Activated CD8-positive, alpha-beta T cell treated with anti-CD3 and anti-CD28 coated beads, Interleukin-2, amount 10 ng/mL, durations not matched to agents 7 days and 5 days (primary cell): ENCODE measurements at regions of chr16 and their contacts with region 1.

Region 1: GRCh38 chr16:69726296-69727060 is at the start of gene NQO1:
- DNase-seq: peak; percentile 95
- ATAC-seq: peak; percentile 99
- H3K4me3 Mint-ChIP-seq: peak within 1 kb of the TSS; percentile 84
- H3K27ac Mint-ChIP-seq: peak within 1 kb of the TSS; percentile 94
- H3K4me1 Mint-ChIP-seq: peaks cover 51% of the 10 kb centered on the region
- H3K27me3 Mint-ChIP-seq: no peaks in the 10 kb centered on the region
- total RNA-seq, gene NQO1: 18.3 to 20.1 TPM

Region 2: GRCh38 chr16:69709456-69710084 is 16.9 kb before region 1 on chr16:
- CTCF ChIA-PET with region 1: interaction called, 12 read pairs
- POLR2A ChIA-PET with region 1: interaction called, 3 read pairs
- DNase-seq: no peak
- ATAC-seq: peak; percentile 58
- H3K4me3 Mint-ChIP-seq: no peak overlapping the region
- H3K27ac Mint-ChIP-seq: no peak overlapping the region
- H3K4me1 Mint-ChIP-seq: no peaks in the 10 kb centered on the region
- H3K27me3 Mint-ChIP-seq: no peaks in the 10 kb centered on the region

Region 3: GRCh38 chr16:69741919-69742904 is 15.7 kb after region 1 on chr16:
- CTCF ChIA-PET with region 1: no interaction called
- POLR2A ChIA-PET with region 1: no interaction called
- DNase-seq: no peak
- ATAC-seq: no peak
- H3K4me3 Mint-ChIP-seq: no peak overlapping the region
- H3K27ac Mint-ChIP-seq: no peak overlapping the region
- H3K4me1 Mint-ChIP-seq: peaks cover under 1% of the 10 kb centered on the region
- H3K27me3 Mint-ChIP-seq: no peaks in the 10 kb centered on the region

Region 4: GRCh38 chr16:69761983-69762813 is 35.7 kb after region 1 on chr16 and contains the start of gene WWP2:
- CTCF ChIA-PET with region 1: interaction called, 5 read pairs
- POLR2A ChIA-PET with region 1: interaction called, 16 read pairs
- DNase-seq: peak; percentile 82
- ATAC-seq: peak; percentile 87
- H3K4me3 Mint-ChIP-seq: peak within 1 kb of the TSS; percentile 89
- H3K27ac Mint-ChIP-seq: peak within 1 kb of the TSS; percentile 96
- H3K4me1 Mint-ChIP-seq: peaks cover 34% of the 10 kb centered on the region
- H3K27me3 Mint-ChIP-seq: no peaks in the 10 kb centered on the region
- total RNA-seq, gene WWP2: 60.1 to 64.5 TPM